ENCODE measurements at regions of chr2 and their contacts with region 1.

Region 1: DNA sequence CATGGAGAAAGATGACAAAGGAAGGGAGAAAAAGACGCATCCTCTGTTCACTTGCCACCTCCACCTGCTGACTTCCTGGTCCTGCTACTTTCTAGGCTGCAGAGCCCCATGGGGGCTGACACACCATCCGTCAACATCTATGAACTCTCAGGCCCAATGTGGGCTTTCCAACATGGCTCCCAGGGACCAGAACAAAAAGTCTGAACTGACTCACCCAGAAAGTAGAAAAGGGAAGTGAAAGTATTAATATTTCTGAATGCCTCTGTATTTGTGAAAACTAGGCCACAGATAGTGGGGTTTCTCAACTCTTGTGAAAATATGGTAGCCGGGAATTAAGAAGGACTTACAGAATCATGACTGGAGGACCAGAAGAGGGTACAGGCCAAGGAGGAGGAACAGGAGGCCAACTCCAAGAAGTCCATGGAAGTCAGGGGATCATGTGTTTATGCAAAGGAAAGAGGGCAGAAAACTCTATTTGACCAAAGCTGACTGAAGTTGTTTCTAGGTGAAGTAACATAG is 123.1 kb upstream of the CAB39 start:
- DNase-seq: peak; percentile 55
- ATAC-seq: peak; percentile 97
- H3K4me3 Mint-ChIP-seq: peak overlapping the region; percentile 59
- H3K27ac Mint-ChIP-seq: peak overlapping the region; percentile 95
- H3K4me1 Mint-ChIP-seq: peaks cover 83% of the 10 kb centered on the region
- H3K27me3 Mint-ChIP-seq: no peaks in the 10 kb centered on the region
- CTCF ChIP-seq: no peak

Region 2: GRCh38 chr2:230335451-230335863 is 254.1 kb before region 1 on chr2:
- CTCF ChIA-PET with region 1: no interaction called
- POLR2A ChIA-PET with region 1: no interaction called
- intact Hi-C with region 1: no loop called
- DNase-seq: no peak
- ATAC-seq: no peak
- H3K4me3 Mint-ChIP-seq: peak overlapping the region; percentile 21
- H3K27ac Mint-ChIP-seq: peak overlapping the region; percentile 73
- H3K4me1 Mint-ChIP-seq: peaks cover 61% of the 10 kb centered on the region
- H3K27me3 Mint-ChIP-seq: no peaks in the 10 kb centered on the region
- CTCF ChIP-seq: no peak

Region 3: GRCh38 chr2:230447455-230448451 is 141.8 kb before region 1 on chr2:
- CTCF ChIA-PET with region 1: no interaction called
- POLR2A ChIA-PET with region 1: interaction called, 15 read pairs
- intact Hi-C with region 1: loop called (anchors 1 kb)
- DNase-seq: no peak
- ATAC-seq: peak; percentile 81
- H3K4me3 Mint-ChIP-seq: peak overlapping the region; percentile 83
- H3K27ac Mint-ChIP-seq: peak overlapping the region; percentile 99
- H3K4me1 Mint-ChIP-seq: peaks cover 93% of the 10 kb centered on the region
- H3K27me3 Mint-ChIP-seq: no peaks in the 10 kb centered on the region
- CTCF ChIP-seq: no peak

Region 4: GRCh38 chr2:230537531-230537976 is 52.0 kb before region 1 on chr2:
- CTCF ChIA-PET with region 1: no interaction called
- POLR2A ChIA-PET with region 1: interaction called, 3 read pairs
- intact Hi-C with region 1: loop called (anchors 1 kb)
- DNase-seq: no peak
- ATAC-seq: peak; percentile 85
- H3K4me3 Mint-ChIP-seq: peak overlapping the region; percentile 53
- H3K27ac Mint-ChIP-seq: peak overlapping the region; percentile 79
- H3K4me1 Mint-ChIP-seq: peaks cover 55% of the 10 kb centered on the region
- H3K27me3 Mint-ChIP-seq: no peaks in the 10 kb centered on the region
- CTCF ChIP-seq: no peak

Region 5: DNA sequence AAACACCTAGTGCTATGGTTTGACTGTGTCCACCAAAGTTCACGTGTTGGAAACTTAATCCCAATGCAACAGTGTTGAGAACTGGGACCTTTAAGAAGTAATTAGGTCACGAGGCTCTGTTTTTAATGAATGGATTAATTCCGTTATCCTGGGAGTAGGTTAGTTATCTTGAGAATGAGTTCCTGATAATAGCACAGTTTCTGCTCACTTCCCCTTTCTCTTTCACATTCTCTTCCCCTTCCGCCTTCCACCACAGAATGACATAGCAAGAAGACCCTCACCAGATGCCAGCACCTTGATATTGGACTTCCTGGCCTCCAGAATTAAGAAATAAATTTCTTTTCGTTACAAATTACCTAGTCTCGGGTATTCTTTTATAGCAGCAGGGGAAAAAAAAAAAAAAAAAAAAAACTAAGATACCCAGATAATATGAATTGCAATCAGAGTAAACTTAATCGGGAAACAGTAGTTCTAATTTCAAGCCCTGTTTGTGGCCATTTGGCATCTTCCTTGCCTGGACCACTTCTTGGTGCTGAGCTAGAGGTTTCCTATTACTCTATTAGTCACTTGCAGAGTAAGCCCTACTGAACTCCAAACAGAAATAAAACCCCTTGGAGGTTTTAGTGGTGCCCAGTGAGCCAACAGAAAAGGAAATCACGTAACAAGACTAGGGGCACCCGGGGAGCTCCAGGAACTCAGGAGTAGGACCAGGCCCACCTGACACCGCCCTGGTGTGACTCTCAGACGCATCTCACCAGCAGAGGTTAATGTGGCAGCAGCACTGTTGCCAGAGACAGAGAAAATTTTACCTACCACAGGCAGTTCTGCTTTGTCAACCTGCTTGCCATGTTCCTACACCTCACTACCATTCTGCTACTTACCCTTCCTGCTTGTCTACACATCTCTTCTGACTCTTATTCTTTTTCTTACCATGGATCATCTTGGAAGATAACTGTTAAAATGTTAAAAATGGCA is 24.5 kb before region 1 on chr2:
- CTCF ChIA-PET with region 1: no interaction called
- POLR2A ChIA-PET with region 1: no interaction called
- intact Hi-C with region 1: loop called (anchors 2 kb)
- DNase-seq: no peak
- ATAC-seq: peak; percentile 91
- H3K4me3 Mint-ChIP-seq: peak overlapping the region; percentile 47
- H3K27ac Mint-ChIP-seq: peak overlapping the region; percentile 78
- H3K4me1 Mint-ChIP-seq: peaks cover 41% of the 10 kb centered on the region
- H3K27me3 Mint-ChIP-seq: no peaks in the 10 kb centered on the region
- CTCF ChIP-seq: no peak

Region 6: DNA sequence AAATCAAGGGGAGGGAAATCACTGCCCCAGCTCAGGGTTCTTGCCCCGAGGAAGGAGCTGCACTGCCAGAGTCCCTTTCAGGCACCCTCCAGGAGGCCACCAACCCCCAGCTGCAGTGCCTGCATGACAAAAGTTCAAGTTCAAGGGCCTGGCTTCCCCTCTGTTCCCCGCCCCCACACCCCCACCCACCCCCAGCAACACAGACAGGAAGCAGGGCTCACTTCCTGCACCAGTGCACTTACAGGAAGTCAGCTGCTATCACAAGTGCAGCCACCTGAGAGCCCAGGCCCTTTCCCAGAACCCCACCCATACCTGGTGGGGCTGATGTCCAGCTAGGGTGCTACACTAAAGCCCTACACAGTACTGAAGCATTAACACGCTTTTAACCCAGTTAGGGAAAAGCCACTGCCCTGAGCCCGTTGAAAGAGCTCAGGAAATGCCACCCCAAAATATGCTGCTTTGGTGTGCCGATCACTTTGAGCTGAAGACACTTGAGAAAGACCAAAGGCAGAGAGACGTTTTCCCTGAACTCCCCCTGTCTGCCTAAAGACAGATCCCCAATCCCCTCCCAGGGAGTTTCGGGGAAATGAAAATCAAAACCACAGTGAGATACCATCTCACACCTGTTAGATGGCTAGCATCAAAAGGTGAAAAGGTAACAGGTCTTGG is 13.1 kb after region 1 on chr2:
- CTCF ChIA-PET with region 1: interaction called, 4 read pairs
- POLR2A ChIA-PET with region 1: interaction called, 64 read pairs
- intact Hi-C with region 1: loop called (anchors 1 kb)
- DNase-seq: peak; percentile 41
- ATAC-seq: peak; percentile 80
- H3K4me3 Mint-ChIP-seq: peak overlapping the region; percentile 66
- H3K27ac Mint-ChIP-seq: peak overlapping the region; percentile 96
- H3K4me1 Mint-ChIP-seq: peaks cover 94% of the 10 kb centered on the region
- H3K27me3 Mint-ChIP-seq: no peaks in the 10 kb centered on the region
- CTCF ChIP-seq: no peak